Breast epithelium (tissue), 4 donors: ENCODE measurements at regions of chr2 and their contacts with region 1.

Region 1: GRCh38 chr2:133936601-133937000 is 317.3 kb upstream of the MGAT5 start:
- DNase-seq: no peak
- H3K4me3 ChIP-seq: no peak overlapping the region
- H3K27ac ChIP-seq: no peak overlapping the region
- H3K4me1 ChIP-seq: no peaks in the 10 kb centered on the region
- H3K27me3 ChIP-seq: no peaks in the 10 kb centered on the region
- CTCF ChIP-seq: no peak
- POLR2A ChIP-seq: no peak

Region 2: DNA sequence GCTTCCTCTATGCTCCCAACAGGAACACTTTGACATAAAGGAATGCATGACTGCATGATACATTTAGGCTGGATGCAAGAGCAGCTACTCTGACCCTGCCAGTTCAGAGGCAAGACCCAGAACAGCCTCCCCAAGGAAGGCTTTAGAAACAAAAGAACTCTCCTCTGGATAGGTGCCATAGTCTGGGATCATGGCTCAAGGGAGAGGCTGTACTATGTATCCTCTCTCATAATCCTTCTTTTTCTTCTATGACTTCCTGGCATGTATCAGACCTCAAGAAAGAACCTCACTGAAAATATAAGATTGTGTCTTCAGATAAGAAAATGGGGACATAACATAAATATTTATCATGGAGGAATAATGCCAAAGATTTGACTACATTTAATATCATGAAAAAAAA is 1072.6 kb before region 1 on chr2:
- intact Hi-C with region 1: no loop called
- DNase-seq: no peak
- H3K4me3 ChIP-seq: no peak overlapping the region
- H3K27ac ChIP-seq: no peak overlapping the region
- H3K4me1 ChIP-seq: no peaks in the 10 kb centered on the region
- H3K27me3 ChIP-seq: no peaks in the 10 kb centered on the region
- CTCF ChIP-seq: no peak
- POLR2A ChIP-seq: no peak

Region 3: DNA sequence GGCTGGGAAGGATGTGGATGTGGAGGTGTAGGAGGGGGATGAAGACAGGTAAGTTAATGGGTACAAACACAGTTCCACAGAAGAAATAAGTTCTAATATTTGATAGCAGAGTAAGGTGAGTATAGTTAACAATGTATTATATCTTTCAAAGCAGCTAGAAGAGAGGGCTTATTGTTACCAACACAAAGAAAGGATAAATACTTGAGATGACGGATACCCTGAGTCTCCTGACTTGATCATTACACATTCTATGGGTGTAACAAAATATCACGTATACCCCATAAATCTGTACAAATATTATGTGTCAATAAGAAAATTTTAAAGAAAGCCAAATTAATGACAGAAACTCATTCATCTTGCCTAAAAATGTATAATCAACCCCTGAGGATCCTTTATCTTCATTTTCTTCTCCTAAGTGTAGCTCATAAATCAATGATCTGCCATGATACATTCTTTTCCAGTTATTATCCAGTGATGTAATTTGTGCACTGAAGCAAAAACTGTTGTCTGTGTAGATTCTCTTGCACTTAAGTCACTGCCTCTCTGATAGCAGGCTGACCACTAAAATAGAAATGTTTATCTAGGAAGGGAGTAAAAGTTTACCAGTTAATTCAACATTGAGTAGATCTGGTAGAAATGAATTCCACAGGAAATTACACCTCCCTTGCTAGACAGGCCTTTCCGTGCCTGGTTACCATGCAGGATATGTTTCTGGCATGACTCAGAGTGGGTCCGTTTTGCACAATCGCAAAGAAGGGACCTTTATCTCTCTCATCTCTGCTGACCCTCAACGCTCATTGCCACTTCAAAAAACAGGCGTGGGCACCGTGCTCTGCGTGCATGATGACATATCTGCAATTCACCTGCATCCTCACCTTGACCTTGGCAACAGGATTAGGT is 118.7 kb before region 1 on chr2:
- intact Hi-C with region 1: no loop called
- DNase-seq: no peak
- H3K4me3 ChIP-seq: no peak overlapping the region
- H3K27ac ChIP-seq: no peak overlapping the region
- H3K4me1 ChIP-seq: no peaks in the 10 kb centered on the region
- H3K27me3 ChIP-seq: no peaks in the 10 kb centered on the region
- CTCF ChIP-seq: no peak
- POLR2A ChIP-seq: no peak

Region 4: DNA sequence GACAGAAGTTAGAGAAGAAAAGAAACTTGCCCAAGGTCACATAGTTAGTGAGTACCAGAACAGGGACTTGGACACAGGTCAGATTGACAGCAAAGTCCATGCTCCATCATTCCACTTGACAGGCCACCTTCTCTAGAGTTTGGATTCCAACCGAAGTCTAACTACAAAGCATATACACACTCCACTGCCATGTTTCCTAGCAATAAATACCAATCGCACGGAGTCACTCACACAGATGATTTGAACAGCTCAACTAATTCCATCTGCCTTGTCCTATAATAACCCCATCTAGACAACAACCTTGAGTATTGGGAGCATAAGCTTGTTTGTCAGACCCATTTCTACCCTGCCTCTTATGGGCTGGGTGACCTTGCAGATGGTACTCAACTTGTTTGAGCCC is 17.3 kb before region 1 on chr2:
- intact Hi-C with region 1: loop called (anchors 1 kb)
- DNase-seq: no peak
- H3K4me3 ChIP-seq: no peak overlapping the region
- H3K27ac ChIP-seq: no peak overlapping the region
- H3K4me1 ChIP-seq: no peaks in the 10 kb centered on the region
- H3K27me3 ChIP-seq: no peaks in the 10 kb centered on the region
- CTCF ChIP-seq: no peak
- POLR2A ChIP-seq: no peak